Endothelial cell of umbilical vein (primary cell): ENCODE measurements at regions of chrX and their contacts with region 1.

Region 1: DNA sequence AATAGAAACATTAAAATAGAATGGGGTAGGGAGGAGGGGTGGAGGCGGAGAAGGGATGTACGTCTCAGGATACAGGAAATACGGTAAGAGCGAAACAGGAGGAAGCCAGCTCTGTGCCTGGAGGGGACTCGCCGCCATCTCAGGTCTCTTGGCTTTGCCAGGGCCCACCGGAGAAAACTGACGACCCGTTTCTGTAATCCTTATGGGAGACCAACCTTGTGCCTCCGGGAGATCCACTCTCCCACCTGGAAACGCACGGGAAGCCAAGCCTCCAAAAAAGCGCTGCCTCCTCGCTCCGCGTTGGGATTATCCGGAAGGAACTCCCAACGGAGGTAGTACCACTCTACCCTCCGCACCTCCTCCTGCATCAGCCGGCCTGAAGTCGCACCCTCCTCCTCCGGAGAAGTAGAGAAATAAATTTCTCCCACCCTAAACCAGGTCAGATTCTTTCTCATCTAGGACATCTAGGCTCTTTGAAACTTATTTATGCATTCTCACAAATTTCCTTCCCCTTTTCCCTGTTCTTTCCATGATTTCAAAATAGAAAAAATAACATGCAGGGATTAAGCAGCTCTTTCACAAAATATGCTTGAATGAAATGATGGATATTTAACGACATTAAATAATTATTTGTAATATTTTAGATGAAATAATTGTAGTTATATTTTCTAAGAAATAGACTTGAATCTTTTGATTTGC is at the start of gene NBDY:
- DNase-seq: peak; percentile 58
- H3K4me3 ChIP-seq: peak within 1 kb of the TSS; percentile 43 to 94 (median 92)
- H3K27ac ChIP-seq: peak within 1 kb of the TSS; percentile 91
- H3K4me1 ChIP-seq: peaks cover 4% of the 10 kb centered on the region
- H3K27me3 ChIP-seq: no peaks in the 10 kb centered on the region
- CTCF ChIP-seq: no peak
- POLR2A ChIP-seq: peak; percentile 60
- total RNA-seq, gene NBDY: 57.3 and 62.2 TPM in 2 replicates

Region 2: DNA sequence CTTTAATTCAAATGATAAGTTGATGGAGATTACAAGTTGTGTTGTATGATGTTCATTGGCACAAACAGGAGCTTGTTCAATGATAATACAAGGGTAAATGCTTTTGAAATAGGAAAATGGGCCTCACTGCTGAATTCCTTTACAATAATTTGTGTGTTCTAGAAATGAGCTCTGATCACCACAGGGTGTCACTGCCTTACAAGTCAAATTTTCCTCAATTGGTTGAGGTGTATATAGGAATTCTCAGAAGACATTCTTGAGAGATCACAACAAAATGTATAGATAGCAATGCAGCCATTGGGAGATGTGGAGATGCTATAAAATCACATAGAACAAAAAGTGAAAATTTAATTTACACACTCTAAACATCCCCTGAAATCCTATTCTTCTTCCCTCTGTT is 447.5 kb before region 1 on chrX:
- CTCF ChIA-PET with region 1: interaction called, 63 read pairs
- POLR2A ChIA-PET with region 1: no interaction called
- dilution Hi-C with region 1: no loop called
- intact Hi-C with region 1: loop called (anchors 1 kb)
- DNase-seq: peak; percentile 20
- H3K4me3 ChIP-seq: no peak overlapping the region
- H3K27ac ChIP-seq: no peak overlapping the region
- H3K4me1 ChIP-seq: no peaks in the 10 kb centered on the region
- H3K27me3 ChIP-seq: no peaks in the 10 kb centered on the region
- CTCF ChIP-seq: no peak
- POLR2A ChIP-seq: no peak

Region 3: GRCh38 chrX:56563231-56564161 is 165.8 kb before region 1 on chrX and contains the start of gene UBQLN2:
- CTCF ChIA-PET with region 1: interaction called, 3 read pairs
- POLR2A ChIA-PET with region 1: no interaction called
- dilution Hi-C with region 1: no loop called
- intact Hi-C with region 1: loop called (anchors 1 kb)
- DNase-seq: peak; percentile 84
- H3K4me3 ChIP-seq: peak within 1 kb of the TSS; percentile 35 to 79 (median 78)
- H3K27ac ChIP-seq: peak within 1 kb of the TSS; percentile 67
- H3K4me1 ChIP-seq: peaks cover 18% of the 10 kb centered on the region
- H3K27me3 ChIP-seq: no peaks in the 10 kb centered on the region
- CTCF ChIP-seq: no peak
- POLR2A ChIP-seq: no peak
- total RNA-seq, gene UBQLN2: 22.8 and 25.3 TPM in 2 replicates

Region 4: DNA sequence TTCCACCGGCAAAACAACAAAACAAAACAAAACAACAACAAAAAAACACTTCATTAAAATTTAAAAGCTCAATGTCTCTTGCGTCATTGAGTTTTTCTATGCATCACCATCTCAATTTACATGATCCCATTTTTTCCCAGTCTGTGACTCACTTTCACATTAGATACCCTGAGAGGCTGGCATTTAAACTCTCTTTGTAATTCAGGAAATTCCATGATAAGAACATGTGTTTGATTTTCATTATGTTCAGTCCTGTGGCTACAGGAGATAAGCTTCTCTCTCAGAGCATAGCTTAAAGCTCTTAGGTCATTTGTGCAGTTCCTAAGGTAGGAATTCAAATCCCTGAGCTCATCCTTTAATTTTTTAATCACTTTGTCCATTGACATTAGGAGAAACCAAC is 104.3 kb after region 1 on chrX:
- CTCF ChIA-PET with region 1: no interaction called
- POLR2A ChIA-PET with region 1: no interaction called
- dilution Hi-C with region 1: no loop called
- intact Hi-C with region 1: no loop called
- DNase-seq: peak; percentile 49
- H3K4me3 ChIP-seq: no peak overlapping the region
- H3K27ac ChIP-seq: no peak overlapping the region
- H3K4me1 ChIP-seq: no peaks in the 10 kb centered on the region
- H3K27me3 ChIP-seq: no peaks in the 10 kb centered on the region
- CTCF ChIP-seq: no peak
- POLR2A ChIP-seq: no peak